ENCODE measurements at regions of chr10 and their contacts with region 1.

Region 1: DNA sequence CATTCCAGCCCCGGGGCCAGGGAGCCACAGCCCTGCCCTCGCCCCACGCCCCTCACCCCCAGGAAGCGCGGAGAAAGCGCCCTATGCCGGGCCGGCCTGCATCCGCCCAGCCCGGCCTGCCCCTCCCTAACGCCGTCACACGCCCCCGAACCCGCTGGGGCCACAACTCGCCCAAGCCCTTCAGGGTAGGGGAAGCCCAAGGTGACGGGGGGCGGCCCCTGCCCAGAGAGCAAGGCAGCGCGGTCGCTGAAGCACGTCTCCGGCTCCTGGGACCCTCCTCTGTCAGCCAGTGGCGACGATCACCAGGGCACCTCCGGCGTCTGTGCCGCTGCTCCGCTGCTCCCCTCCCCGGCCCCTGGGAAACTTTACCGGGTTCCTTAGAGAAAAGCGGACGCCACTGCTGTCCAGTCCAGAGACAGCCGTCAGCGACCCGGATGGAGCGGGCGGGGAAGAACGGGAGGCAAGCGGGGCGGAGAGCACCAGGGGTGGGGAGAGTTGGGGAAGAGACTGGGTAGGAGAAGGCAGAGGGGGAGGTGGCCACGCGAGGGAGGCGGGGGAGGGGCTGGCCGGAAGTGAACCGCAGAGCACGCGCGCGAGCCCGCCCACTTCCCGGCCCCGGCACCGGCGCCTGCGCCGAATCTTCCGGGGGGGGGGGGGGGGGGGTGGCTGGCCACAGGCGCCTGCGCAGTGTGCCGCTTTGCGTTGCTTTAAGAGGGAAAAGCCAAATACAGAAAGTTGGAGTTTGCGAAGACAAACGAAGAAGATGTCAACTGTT is at the start of gene HERC4:
- DNase-seq: peak; percentile 72 to 97
- H3K4me3 ChIP-seq: peak within 1 kb of the TSS; percentile 87 to 99
- H3K27ac ChIP-seq: peak within 1 kb of the TSS; percentile 99 to 100
- H3K4me1 ChIP-seq: peaks cover 0 to 6% of the 10 kb centered on the region in 2 donors
- H3K27me3 ChIP-seq: no peaks in the 10 kb centered on the region
- CTCF ChIP-seq: no peak
- total RNA-seq, gene HERC4: 15.0 TPM

Region 2: GRCh38 chr10:67849331-67850011 is 225.5 kb before region 1 on chr10:
- intact Hi-C with region 1: loop called (anchors 2 kb)
- DNase-seq: peak; percentile 78 to 98
- H3K4me3 ChIP-seq: peak overlapping the region; percentile 77 to 87
- H3K27ac ChIP-seq: peak overlapping the region; percentile 92 to 94
- H3K4me1 ChIP-seq: peaks cover 3 to 5% of the 10 kb centered on the region in 2 donors
- H3K27me3 ChIP-seq: no peaks in the 10 kb centered on the region
- CTCF ChIP-seq: no peak

Region 3: DNA sequence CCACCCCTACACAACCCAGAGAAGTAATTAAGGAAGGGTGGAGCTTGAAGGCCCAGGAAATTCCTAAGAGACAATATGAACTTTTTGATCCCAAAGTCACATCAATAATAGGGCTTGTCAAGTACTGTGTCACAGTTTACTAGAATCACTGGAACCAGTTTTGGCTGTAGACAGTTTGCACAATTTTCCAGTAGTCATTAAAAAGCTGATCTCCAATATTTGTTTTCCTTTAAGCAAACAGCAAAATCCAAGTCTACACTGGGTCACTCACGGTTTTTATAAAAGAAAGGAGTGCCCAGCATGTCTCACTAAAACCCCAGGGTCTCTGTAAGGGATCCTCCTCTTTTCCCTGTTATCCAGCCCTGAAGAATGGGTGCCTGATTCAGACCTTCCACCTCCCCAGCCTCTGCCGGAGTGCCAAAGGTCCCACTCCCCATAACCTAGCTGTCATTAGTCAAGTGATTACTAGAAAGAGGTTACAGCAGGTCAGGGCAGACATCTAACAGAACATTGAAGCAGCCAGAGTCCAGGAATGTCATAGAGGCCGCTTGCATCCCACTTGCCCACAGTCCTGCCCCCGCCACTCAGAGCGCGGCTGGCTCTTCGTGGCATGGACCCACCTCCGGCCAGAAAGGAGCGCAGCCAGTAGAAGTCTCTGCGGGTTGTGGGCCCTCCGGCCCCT is 451.8 kb after region 1 on chr10:
- intact Hi-C with region 1: loop called (anchors 5 kb)
- DNase-seq: no peak
- H3K4me3 ChIP-seq: peak overlapping the region; percentile 94 to 95
- H3K27ac ChIP-seq: peak overlapping the region; percentile 95 to 97
- H3K4me1 ChIP-seq: no peaks in the 10 kb centered on the region
- H3K27me3 ChIP-seq: no peaks in the 10 kb centered on the region
- CTCF ChIP-seq: no peak

Measured in ascending aorta (tissue), 2 donors.